ENCODE measurements at regions of chr17 and their contacts with region 1.

Region 1: DNA sequence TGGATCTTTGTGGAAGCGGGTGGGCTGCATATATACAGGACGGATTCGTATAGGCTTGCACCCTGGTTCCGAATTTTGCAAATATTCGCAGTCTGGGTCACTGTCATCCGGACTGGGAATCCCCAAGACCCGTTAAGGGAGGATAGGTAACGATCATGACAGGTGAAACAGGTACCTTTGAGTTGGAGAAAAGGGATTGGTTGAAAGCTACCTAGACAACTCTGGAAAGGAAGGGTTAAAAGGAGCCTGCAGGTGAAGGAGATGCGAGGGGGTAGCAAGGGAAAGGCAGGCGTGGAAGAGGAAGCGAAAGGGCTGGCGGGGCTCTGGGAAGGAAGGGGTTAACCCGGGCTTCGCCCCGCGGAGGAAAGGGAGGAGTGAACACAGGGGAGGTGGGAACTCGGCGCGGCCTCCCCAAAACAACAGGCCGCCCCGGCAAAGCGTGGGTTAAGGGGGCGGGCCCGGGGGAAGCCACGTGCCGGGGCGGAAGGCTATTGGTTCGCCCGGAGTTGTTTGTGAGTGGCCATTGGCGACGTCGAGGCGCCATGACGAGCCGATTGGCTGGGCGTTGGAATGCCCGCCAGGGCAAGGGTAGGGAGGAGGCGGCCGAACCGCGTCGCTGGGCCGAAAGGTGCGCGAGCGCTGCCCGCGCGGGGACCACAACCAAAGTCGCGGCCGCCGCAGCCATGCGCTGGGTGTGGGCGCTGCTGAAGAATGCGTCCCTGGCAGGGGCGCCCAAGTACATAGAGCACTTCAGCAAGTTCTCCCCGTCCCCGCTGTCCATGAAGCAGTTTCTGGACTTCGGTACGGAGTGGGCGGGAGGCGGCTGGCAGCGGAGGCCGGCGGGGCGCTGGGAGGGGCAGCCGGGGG is at the start of gene PDK2:
- DNase-seq: peak; percentile 97
- H3K4me3 Mint-ChIP-seq: peak within 1 kb of the TSS; percentile 96
- H3K27ac Mint-ChIP-seq: peak within 1 kb of the TSS; percentile 93
- H3K4me1 Mint-ChIP-seq: peaks cover 27% of the 10 kb centered on the region
- H3K27me3 Mint-ChIP-seq: peaks cover 5% of the 10 kb centered on the region
- total RNA-seq, gene PDK2: 29.4 to 31.3 TPM

Region 2: DNA sequence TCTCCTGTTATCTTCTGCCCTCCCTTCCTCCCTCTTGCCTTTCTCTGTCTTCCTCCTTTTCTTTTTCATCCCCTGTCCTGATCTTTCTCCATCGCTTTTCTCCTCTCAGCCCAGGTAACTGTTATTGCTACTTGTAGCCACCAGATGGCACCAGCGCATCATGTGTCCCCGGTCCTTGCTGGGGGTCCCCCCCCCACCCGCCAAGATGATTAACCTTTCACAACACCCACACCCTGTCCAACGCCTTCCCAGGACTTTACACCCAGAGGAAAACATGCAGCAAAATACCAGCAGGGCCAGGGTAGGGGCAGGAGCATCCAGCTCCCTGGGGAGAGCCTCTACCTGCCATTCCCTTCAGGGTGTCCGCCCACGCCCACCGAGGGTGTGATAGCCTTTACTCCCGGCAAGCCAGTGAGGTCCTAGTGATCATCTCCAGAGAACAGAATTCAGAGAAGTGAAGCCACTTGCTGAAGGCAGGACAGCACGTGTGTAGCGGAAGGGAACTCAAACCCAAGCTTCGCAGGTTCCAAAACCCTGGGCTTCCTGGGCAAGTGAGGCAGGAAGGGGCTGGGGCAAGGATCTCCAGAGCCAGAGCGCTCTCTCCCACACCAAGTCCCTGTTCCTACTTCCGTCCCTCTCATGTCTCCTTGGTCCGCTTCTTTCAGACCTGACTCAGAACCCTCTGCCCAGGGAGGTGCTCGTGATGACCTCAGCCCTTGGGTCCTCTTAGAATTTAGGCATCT is 233.7 kb before region 1 on chr17:
- CTCF ChIA-PET with region 1: no interaction called
- POLR2A ChIA-PET with region 1: no interaction called
- DNase-seq: peak; percentile 57
- H3K4me3 Mint-ChIP-seq: no peak overlapping the region
- H3K27ac Mint-ChIP-seq: no peak overlapping the region
- H3K4me1 Mint-ChIP-seq: no peaks in the 10 kb centered on the region
- H3K27me3 Mint-ChIP-seq: peaks cover 11% of the 10 kb centered on the region

Region 3: GRCh38 chr17:50026901-50027630 is 67.9 kb before region 1 on chr17:
- CTCF ChIA-PET with region 1: interaction called, 13 read pairs
- POLR2A ChIA-PET with region 1: no interaction called
- DNase-seq: peak; percentile 74
- H3K4me3 Mint-ChIP-seq: no peak overlapping the region
- H3K27ac Mint-ChIP-seq: no peak overlapping the region
- H3K4me1 Mint-ChIP-seq: peaks cover 20% of the 10 kb centered on the region
- H3K27me3 Mint-ChIP-seq: peaks cover 17% of the 10 kb centered on the region

Region 4: DNA sequence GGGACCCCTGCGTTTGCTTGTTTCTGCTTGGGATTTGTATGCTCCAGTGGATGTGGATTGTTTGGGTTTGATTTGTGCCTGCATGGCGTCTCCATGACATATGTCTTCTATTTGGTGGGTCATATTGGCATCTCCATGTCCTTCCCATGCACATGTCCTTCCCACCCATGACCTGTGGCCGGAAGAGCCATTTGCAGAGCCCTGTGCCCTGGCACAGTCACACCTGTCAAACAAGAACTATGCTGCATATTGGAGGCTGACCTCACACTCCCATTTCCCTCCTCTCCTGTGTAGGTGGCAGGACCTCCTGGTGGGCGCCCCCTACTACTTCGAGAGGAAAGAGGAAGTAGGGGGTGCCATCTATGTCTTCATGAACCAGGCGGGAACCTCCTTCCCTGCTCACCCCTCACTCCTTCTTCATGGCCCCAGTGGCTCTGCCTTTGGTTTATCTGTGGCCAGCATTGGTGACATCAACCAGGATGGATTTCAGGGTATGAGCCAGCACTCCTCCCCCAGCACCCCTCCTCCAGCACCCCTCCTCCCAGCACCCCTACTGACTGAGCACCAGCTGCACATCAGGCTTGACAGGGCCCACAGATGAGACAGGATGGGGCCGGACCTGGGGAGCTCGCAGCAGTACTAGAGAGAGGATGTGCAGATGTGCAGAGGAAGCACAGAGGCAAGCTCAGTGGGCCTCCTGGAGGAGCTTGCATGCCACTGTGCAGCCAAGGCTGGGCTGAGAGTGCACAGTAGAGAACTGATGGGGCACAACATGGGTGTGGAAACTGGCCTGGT is 23.1 kb before region 1 on chr17:
- CTCF ChIA-PET with region 1: interaction called, 29 read pairs
- POLR2A ChIA-PET with region 1: no interaction called
- DNase-seq: no peak
- H3K4me3 Mint-ChIP-seq: no peak overlapping the region
- H3K27ac Mint-ChIP-seq: no peak overlapping the region
- H3K4me1 Mint-ChIP-seq: peaks cover 2% of the 10 kb centered on the region
- H3K27me3 Mint-ChIP-seq: no peaks in the 10 kb centered on the region

Region 5: DNA sequence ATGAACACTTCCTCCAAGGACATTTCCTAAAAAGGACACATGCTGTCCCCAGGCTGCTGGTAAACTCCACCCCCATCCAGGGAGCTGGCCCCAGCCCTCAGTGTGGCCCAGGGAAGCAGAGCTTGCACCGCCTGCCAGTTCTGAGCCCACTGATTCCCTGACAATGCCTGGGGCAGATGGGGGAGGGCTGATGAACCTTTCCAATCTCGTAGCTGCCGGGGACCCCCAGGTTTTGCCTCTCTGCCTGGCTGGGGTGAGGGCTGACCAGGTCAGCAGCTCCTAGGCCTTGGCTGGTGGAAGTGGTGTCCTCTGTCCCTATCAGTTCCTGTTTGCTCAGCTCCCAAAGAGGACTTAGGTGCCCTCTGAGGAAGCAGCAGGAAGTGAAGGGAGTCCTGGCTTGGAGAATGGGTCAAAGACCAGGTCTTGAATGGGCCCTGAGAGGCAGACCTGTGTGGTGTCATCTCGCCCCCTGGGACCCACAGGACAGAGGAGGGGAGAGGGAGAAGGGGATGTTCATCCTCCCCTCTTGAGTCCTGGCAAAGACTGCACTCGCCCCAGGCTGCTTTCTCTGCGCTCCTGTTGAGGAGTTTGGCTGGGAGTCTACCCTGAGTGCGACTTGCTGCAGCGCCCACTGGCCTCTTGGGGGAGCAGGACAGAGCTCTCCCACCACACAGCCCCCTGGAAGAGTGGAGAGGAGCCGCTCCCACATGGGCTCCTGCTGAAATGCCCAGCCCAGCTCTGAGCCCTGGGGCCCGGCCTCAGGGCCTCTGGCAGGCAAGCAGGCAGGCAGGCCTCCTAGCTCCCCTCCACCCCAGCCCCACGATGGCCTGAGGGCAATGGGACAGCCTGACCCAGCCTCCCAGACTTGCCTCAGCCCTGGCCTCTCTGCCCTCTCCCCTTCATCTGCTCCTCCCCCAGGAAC is 17.0 kb after region 1 on chr17:
- CTCF ChIA-PET with region 1: interaction called, 30 read pairs
- POLR2A ChIA-PET with region 1: no interaction called
- DNase-seq: no peak
- H3K4me3 Mint-ChIP-seq: no peak overlapping the region
- H3K27ac Mint-ChIP-seq: no peak overlapping the region
- H3K4me1 Mint-ChIP-seq: peaks cover 4% of the 10 kb centered on the region
- H3K27me3 Mint-ChIP-seq: peaks cover 17% of the 10 kb centered on the region

Region 6: DNA sequence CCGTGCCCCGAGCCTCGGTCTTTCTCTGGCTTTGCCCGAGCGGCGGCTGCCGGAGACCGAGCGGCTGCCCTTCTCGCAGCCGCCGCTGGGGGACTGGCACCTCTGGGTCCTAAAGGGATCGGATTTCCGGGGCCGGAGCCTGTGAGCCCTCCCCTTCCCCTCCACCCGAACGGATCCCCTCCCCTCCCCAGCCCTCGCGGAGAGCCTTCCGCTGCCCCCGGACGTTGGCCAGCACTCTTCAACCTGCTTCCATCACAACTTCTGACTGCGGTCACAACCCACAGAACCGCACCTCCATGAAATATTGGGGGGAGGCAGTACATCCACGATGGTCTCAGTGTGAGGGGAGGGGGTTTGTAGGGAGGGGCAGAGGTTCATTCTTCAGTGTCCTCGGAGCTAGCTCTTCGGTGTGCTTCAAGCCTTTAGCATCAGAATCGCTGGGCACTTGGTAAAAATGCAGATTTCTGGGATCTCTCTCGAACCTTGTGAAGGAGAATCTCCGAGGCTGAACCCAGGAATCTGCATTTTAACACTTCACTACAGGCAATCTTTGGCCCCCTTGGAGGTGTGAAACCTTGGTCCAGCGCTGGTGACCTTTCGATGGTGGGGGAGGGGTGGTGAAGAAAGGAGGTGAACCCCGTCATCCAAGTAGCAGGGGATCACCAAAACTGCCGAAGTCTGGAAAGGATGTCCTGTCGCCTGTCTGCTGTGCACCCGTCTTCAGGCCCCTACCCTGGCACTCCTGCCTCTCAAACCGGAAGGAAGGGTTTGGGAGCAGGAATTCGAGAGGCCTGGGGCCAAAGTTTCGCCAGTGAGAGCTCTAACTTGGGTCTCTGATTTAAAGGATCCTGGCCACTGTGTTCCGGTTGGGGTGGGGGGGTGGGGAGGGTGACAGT is 56.3 kb after region 1 on chr17:
- CTCF ChIA-PET with region 1: interaction called, 10 read pairs
- POLR2A ChIA-PET with region 1: no interaction called
- DNase-seq: peak; percentile 92
- H3K4me3 Mint-ChIP-seq: peak overlapping the region; percentile 89
- H3K27ac Mint-ChIP-seq: peak overlapping the region; percentile 95
- H3K4me1 Mint-ChIP-seq: peaks cover 50% of the 10 kb centered on the region
- H3K27me3 Mint-ChIP-seq: no peaks in the 10 kb centered on the region

Region 7: DNA sequence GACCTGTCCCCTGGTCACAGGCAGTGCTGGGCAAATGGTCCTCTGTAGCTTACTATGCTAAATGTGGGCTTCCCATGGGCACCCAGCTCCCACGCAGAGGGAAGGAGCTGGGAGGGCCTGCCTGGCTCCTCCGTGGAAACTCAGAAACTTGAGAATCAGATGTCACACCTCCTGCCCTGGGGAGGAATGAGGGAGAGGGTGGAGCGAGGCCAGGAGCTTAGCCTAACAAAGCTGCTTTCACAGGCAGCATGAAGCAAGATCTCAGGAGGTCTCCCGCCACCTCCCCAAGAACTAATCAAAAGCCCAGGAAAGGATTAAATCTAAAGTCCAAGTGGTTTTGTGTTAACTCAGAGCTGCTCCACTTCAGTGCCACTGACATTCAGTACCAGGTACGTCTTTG is 217.3 kb after region 1 on chr17:
- CTCF ChIA-PET with region 1: no interaction called
- POLR2A ChIA-PET with region 1: no interaction called
- DNase-seq: no peak
- H3K4me3 Mint-ChIP-seq: no peak overlapping the region
- H3K27ac Mint-ChIP-seq: no peak overlapping the region
- H3K4me1 Mint-ChIP-seq: peaks cover 3% of the 10 kb centered on the region
- H3K27me3 Mint-ChIP-seq: peaks cover 17% of the 10 kb centered on the region

Measured in activated CD4-positive, alpha-beta T cell treated with anti-CD3 and anti-CD28 coated beads, Interleukin-2, amount 10 ng/mL, durations not matched to agents 7 days and 5 days (primary cell).